ENCODE measurements at regions of chr5 and their contacts with region 1.

Region 1: DNA sequence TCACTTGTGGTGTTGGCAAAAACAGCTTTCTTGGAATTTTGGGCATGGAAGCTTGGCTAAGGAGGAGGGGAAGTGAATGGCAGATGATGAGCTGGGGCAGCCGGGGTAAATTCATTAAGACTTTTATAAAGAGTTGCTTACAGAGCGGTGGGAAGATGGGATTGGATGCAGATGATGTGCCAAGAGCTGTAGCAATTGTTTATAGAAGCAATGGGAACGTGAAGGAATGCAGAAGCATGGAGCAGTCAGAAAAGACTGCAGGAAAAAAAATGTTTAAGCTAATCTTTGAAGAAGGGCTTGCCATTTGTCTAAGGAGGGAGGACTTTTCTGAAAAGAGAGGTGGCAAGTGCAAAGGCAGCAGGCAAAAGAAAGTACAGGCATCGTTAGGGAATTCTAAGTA is 86.6 kb upstream of the SHISAL2B start:
- DNase-seq: no peak
- ATAC-seq: no peak
- H3K4me3 ChIP-seq: no peak overlapping the region
- H3K27ac ChIP-seq: no peak overlapping the region
- H3K4me1 ChIP-seq: no peaks in the 10 kb centered on the region
- H3K27me3 ChIP-seq: no peaks in the 10 kb centered on the region
- CTCF ChIP-seq: no peak

Region 2: DNA sequence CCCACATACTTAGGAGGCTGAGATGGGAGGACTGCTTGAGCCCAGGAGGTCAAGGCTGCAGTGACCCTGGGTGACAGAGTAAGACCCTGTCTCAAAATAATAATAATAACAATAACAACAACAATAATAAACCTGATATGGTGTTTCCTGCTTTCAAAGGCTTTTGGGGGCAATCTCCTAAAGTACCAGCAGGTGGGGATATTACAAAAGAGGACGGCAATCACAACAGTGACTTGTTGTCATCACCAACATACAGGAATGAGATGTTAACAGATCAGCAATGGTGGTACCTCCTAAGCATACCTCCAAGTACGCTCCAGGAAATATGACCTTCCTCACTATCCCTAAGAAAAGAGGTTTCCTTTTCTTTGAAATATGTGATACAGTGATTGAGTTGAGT is 529.1 kb before region 1 on chr5:
- intact Hi-C with region 1: loop called in 1 of 10 experiments (anchors 5 kb)
- DNase-seq: no peak
- ATAC-seq: peak in 1 of 8 donors; percentile 41
- H3K4me3 ChIP-seq: no peak overlapping the region
- H3K27ac ChIP-seq: no peak overlapping the region
- H3K4me1 ChIP-seq: no peaks in the 10 kb centered on the region
- H3K27me3 ChIP-seq: no peaks in the 10 kb centered on the region
- CTCF ChIP-seq: peak in 8 of 9 donors; percentile 20 to 65 (median 58)

Region 3: GRCh38 chr5:64147849-64148441 is 455.7 kb before region 1 on chr5:
- intact Hi-C with region 1: loop called in 2 of 10 experiments (anchors 5 to 10 kb)
- DNase-seq: peak; percentile 44 to 63
- ATAC-seq: peak; percentile 39 to 81 (median 65)
- H3K4me3 ChIP-seq: no peak overlapping the region
- H3K27ac ChIP-seq: no peak overlapping the region
- H3K4me1 ChIP-seq: peaks cover 3 to 28% (median 11%) of the 10 kb centered on the region in 9 donors
- H3K27me3 ChIP-seq: no peaks in the 10 kb centered on the region
- CTCF ChIP-seq: peak; percentile 40 to 88 (median 79)

Region 4: GRCh38 chr5:64161420-64161819 is 442.3 kb before region 1 on chr5:
- intact Hi-C with region 1: loop called in 1 of 10 experiments (anchors 10 kb)
- DNase-seq: no peak
- ATAC-seq: no peak
- H3K4me3 ChIP-seq: no peak overlapping the region
- H3K27ac ChIP-seq: no peak overlapping the region
- H3K4me1 ChIP-seq: peaks cover 0 to 19% (median 8%) of the 10 kb centered on the region in 9 donors
- H3K27me3 ChIP-seq: peaks cover 0 to 31% (median 0%) of the 10 kb centered on the region in 7 donors
- CTCF ChIP-seq: no peak

Region 5: GRCh38 chr5:64229163-64229774 is 374.4 kb before region 1 on chr5:
- intact Hi-C with region 1: loop called in 2 of 10 experiments (anchors 5 kb)
- DNase-seq: no peak
- ATAC-seq: peak in 1 of 8 donors; percentile 47
- H3K4me3 ChIP-seq: no peak overlapping the region
- H3K27ac ChIP-seq: no peak overlapping the region
- H3K4me1 ChIP-seq: no peaks in the 10 kb centered on the region
- H3K27me3 ChIP-seq: no peaks in the 10 kb centered on the region
- CTCF ChIP-seq: peak; percentile 49 to 79 (median 69)

Region 6: DNA sequence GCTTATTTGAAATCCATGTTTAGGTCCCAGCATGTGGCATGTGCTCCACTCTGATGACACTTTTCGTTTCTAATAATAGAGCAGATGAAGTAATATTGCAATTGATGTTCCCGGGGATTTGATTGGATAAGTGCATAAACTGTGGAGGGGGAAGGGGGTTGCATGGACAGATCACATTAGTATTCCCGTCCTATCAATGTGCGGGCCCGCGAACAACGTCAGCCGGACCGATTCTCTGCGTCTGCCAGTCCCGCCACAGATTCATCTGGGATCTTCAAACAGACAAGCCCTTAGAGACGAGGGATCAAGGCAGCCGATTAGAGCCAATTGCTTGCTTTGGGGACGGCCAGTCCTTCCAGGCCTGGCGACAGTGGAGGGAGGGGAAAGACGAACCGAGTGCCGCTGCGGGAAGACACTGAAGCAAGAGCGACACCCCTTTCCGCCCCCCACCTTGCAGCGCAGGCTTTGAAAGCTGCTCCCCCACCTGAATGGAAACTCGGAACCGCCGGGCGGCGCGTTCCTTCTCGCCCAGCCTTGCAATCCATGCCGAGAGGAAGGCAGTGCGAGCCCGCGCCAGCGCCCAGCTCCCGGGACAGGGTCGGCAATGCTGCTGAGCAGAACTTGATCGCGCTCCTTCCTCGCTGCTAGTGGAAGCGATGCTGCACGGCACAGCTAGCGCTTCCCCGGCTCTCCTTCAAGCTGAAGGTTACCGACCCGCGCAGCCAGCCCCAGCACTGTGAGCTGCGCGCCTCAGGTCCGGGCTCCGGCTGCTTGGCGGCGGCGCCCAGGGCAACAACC is 97.7 kb before region 1 on chr5 and contains the start of gene RGS7BP:
- intact Hi-C with region 1: loop called in 4 of 10 experiments (anchors 5 to 10 kb)
- DNase-seq: peak; percentile 23 to 60
- ATAC-seq: peak; percentile 86 to 98 (median 92)
- H3K4me3 ChIP-seq: peak within 1 kb of the TSS; percentile 41 to 67 (median 62)
- H3K27ac ChIP-seq: peak within 1 kb of the TSS in 5 of 10 donors; percentile 5 to 59 (median 48)
- H3K4me1 ChIP-seq: peaks cover 0 to 36% (median 7%) of the 10 kb centered on the region in 9 donors
- H3K27me3 ChIP-seq: peaks cover 0 to 47% (median 29%) of the 10 kb centered on the region in 7 donors
- CTCF ChIP-seq: peak in 3 of 9 donors; percentile 34 to 58 (median 35)
- total RNA-seq, gene RGS7BP: 0.81 to 3.1 (median 1.7) TPM